ENCODE measurements at regions of chr11 and their contacts with region 1.

Region 1: DNA sequence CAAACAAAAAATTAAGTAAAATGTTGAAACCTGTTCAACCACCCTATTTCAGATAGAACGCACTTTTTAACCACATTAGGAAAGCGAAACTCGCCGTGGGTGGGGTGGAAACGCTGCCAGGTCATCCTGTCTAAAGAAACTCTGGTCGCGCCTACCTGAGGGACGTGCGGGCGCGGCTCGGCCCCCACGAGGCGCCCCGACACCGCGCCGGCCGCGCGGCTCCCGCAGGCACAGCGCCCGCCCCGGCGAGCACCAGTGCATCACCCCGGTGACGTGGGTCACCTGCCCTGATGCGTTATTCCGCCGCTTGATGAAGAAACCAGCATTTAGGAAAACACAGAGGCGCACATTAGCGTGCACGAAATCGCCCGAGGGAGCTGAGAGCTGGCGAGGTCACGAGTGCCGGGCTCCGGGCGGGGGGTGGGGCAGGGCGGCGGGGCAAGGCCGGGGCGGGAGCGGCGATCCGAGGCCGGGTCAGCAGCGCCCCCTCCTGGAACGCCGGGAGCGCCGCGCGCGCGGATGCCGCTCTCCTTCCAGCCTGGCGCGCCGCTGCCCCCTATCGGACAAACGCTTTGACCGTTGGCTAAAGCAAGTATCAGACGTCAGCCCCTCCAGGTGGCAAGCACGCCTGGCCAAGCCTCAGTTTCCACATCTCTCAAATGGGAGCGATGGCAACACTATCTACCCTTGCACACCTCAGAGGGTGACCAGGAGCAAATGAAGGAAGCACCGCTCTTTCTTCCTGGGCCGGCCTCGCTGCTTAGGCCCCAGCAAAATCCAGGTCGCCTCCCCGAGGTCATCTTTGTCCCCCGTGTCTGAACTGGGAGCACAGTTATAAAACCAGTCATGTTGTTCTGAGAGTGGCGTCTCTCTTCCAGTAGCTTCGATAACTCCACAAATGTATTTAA is 15.7 kb upstream of the SNX32 start:
- DNase-seq: peak; percentile 98
- H3K4me3 ChIP-seq: peak overlapping the region; percentile 52
- H3K27ac ChIP-seq: peak overlapping the region; percentile 85
- H3K4me1 ChIP-seq: peaks cover 12% of the 10 kb centered on the region
- H3K27me3 ChIP-seq: no peaks in the 10 kb centered on the region
- CTCF ChIP-seq: peak; percentile 100

Region 2: DNA sequence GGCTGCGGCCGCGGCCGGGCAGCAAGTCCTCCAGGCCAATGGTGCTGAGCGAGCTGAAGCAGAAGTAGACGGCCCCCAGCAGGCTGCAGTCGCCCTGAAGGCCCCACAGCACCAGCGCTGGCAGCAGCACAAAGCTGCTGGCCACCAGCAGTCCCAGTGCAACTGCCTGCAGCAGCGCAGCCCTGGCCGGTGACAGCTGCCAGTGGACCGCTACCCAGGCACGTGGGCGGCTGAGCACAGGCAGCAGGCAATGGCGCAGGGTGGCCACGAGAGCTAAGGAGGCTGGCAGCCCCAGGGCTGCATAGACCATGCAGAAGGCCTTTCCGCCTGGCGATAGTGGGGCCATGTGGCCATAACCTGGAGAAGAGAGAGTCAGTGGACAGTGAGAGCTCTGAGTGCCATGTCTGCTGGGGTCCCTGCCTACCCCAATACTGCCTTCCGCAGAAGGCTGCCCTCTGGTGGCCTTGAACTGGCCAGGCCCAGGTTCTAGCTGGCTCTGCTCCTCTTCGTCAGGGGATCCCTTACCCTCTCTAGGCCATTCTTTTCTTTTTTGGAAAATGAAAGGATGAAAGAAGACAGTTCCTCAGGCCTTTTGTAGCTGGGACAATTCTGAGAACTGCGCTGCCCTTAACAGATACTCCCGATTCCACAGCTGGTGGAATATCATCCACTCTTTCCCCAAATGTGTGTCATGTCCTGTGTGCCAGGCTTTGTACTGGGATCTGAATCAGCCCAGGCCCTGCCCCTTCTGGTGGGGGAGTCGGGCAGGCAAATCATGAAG is 224.4 kb before region 1 on chr11:
- intact Hi-C with region 1: no loop called
- DNase-seq: no peak
- H3K4me3 ChIP-seq: no peak overlapping the region
- H3K27ac ChIP-seq: no peak overlapping the region
- H3K4me1 ChIP-seq: peaks cover 5% of the 10 kb centered on the region
- H3K27me3 ChIP-seq: no peaks in the 10 kb centered on the region
- CTCF ChIP-seq: peak; percentile 38

Region 3: DNA sequence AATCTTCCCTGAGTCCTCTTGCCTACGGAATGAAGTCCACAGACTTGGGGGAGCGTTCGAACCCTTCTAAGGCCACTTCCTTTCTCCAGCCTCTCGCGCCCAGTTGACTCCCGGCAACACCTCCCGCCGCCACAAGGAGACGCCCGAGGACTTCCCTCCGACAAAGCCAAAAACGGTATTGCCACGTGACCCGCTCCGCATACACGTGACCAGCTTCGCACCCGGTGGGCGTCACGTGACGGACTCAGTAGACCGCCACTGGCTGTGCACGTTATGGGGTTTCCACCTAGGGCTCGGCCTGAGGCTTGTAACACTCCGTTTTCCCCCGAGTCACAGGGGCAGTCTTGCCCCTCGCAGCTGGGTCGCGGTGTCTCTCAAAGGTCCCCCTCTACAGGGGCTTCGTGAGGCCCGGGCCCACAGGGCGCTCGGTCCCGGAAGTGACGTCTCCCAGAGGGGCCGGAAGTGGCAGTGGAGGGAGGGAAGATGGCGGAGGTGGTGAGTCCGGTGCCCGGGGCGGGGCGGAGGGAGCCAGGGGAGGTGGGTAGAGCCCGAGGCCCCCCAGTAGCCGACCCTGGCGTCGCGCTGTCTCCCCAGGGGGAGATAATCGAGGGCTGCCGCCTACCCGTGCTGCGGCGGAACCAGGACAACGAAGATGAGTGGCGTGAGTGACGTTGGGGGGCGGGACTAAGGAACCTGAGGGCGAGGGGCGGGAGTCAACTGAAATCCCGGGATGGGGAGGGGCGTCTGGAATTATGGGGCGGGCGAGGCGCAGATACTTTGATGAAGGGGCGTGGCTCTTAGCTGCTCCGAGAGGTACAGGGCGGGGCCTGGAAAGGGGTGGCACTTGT is 106.1 kb before region 1 on chr11 and contains the start of gene KAT5:
- intact Hi-C with region 1: loop called (anchors 2 kb)
- DNase-seq: peak; percentile 99
- H3K4me3 ChIP-seq: peak within 1 kb of the TSS; percentile 63
- H3K27ac ChIP-seq: peak within 1 kb of the TSS; percentile 97
- H3K4me1 ChIP-seq: peaks cover 7% of the 10 kb centered on the region
- H3K27me3 ChIP-seq: no peaks in the 10 kb centered on the region
- CTCF ChIP-seq: peak; percentile 98
- total RNA-seq, gene KAT5: 65.3 to 83.4 TPM

Region 4: DNA sequence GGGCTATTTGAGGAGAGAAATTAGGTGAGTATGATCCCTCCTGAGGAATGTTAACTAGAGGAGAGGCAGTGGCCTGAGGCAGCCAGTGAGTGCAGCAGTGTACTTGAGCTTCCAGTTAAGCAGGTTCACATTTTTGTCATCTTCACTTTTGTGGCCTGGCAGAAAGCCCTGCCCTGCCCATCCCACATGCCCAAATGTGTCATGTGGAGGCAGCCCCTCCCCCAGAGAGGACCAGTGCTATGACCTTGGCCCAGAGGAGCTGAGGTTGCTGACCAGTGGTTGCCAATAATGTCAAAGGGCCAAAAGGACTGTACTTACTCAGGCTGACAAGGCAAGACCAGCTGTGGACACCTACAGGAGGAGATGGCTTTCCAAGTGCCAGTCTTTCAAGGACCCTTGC is 1430.6 kb after region 1 on chr11:
- intact Hi-C with region 1: no loop called
- DNase-seq: no peak
- H3K4me3 ChIP-seq: no peak overlapping the region
- H3K27ac ChIP-seq: no peak overlapping the region
- H3K4me1 ChIP-seq: no peaks in the 10 kb centered on the region
- H3K27me3 ChIP-seq: no peaks in the 10 kb centered on the region
- CTCF ChIP-seq: no peak